Lower lobe of right lung (tissue), 2 donors: ENCODE measurements at regions of chr17 and their contacts with region 1.

Region 1: DNA sequence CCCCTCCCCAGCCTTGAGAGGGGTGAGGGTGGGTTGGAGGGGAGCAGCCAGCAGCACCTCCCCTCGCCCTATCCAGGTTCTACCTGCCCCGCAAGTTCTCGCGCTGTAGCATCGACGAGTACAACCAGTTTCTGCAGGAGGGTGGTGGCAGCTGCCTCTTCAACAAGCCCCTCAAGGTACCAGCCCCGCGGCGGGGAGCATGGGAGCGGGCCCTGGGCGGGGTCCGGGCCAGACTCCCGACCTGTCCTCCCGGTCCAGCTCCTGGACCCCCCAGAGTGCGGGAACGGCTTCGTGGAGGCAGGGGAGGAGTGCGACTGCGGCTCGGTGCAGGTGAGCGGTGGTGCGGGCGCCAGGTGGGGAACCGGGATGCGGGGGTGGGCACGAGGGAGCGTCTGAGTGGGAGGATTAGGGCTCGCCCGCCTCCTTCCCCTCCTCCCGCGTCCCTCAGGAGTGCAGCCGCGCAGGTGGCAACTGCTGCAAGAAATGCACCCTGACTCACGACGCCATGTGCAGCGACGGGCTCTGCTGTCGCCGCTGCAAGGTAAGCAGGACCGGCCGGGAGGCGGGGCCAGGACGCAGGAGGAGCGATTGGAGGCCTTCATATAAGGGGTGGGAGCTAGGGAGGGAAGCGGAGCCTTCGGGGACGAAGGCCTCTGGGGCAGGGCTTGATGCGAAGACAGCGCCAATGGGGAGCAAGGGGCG is 16.5 kb downstream of the ADAM11 start:
- DNase-seq: peak; percentile 98
- ATAC-seq: peak; percentile 97
- H3K4me3 ChIP-seq: peak overlapping the region; percentile 77
- H3K27ac ChIP-seq: no peak overlapping the region
- H3K4me1 ChIP-seq: peaks cover 29% of the 10 kb centered on the region
- H3K27me3 ChIP-seq: peaks cover 38% of the 10 kb centered on the region
- CTCF ChIP-seq: peak; percentile 11

Region 2: DNA sequence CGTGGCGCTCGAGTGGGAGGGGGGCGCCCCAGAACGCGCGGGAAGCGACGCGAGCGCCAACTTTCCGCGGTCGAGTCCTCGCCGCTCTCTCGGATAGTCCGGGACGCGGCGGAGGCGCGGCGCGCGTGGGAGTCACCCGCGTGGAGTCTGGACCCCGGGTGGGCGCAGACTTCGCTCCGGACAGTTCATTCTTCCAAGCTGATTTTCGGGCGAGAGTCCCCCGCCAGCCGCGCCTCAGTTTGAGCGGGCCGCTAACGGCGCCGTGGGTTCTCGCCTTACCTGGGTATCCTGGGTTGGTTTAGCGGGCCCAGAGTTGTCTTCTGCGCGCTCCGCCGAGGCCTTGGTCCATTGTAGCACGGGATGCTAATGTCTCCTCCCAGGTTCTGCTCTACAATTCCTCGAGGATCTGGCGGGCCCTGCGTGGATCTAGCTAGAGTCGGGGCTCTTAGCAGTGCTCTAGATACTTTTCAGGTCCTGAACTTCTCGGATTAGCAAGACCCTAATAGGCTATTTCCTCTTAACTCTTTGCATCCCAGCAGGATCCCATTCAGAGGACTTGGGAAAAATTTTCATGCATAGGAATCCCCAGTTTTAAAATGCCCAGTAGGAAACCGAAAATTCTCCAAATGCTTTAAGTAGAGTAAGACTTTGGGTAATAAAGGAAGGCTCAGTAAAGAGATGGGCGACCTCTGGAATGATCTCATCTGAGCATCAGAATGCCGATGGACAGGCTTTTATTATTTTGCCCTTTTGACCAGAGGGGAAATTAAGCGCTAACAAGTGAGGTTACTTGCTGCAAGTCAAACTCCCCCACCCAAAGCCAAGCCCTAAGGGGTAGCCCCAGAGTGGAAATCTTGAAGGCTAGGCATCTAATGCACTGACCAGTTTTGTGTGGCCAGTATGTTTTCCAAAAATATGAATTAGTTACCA is 55.3 kb after region 1 on chr17:
- intact Hi-C with region 1: no loop called
- DNase-seq: no peak
- ATAC-seq: peak in 1 of 2 donors; percentile 21
- H3K4me3 ChIP-seq: peak overlapping the region; percentile 55
- H3K27ac ChIP-seq: peak overlapping the region; percentile 51
- H3K4me1 ChIP-seq: peaks cover 13% of the 10 kb centered on the region
- H3K27me3 ChIP-seq: peaks cover 76% of the 10 kb centered on the region
- CTCF ChIP-seq: no peak

Region 3: GRCh38 chr17:44859701-44860100 is 84.4 kb after region 1 on chr17:
- intact Hi-C with region 1: loop called (anchors 5 kb)
- DNase-seq: no peak
- ATAC-seq: no peak
- H3K4me3 ChIP-seq: no peak overlapping the region
- H3K27ac ChIP-seq: no peak overlapping the region
- H3K4me1 ChIP-seq: no peaks in the 10 kb centered on the region
- H3K27me3 ChIP-seq: no peaks in the 10 kb centered on the region
- CTCF ChIP-seq: no peak

Region 4: DNA sequence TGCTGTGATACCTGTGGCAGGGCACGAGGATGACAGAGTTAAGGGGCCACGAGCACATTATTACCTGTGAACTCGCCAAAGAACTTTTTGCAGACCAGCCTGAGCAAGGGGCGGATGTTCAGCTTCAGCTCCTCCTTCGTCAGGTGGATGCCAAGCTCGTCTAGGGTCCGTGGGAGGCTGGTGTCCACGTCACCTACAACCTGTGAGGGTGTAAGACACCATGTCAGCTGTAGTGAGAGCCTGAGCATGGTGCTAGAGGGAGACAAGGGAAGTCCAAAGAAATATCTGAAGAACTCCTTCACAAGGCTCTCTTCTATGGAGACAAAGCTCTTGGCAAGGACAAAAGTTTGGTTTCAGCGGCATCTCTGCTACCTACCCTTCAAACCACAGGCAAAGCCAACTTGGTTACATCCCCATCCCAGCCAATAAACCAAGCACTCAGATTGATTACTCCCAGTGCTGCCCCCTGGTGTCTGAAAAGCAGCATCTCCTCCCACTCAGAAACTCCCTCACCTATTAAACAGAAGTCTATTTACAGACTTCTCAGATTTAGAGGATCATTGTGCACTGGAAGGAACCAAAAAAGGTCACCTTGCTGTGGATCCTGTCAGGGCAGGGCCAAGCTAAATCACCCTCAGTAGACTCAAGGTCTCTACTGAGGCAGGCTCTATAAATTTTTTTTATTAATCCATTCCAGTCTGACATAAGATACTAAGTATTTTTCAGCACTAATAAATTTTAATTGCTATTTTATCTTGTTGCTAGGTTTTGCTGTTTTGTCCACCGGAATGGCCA is 89.8 kb after region 1 on chr17:
- intact Hi-C with region 1: loop called (anchors 5 kb)
- DNase-seq: peak; percentile 61
- ATAC-seq: peak; percentile 71 to 77
- H3K4me3 ChIP-seq: no peak overlapping the region
- H3K27ac ChIP-seq: no peak overlapping the region
- H3K4me1 ChIP-seq: no peaks in the 10 kb centered on the region
- H3K27me3 ChIP-seq: no peaks in the 10 kb centered on the region
- CTCF ChIP-seq: peak; percentile 88

Region 5: GRCh38 chr17:44894642-44895041 is 119.4 kb after region 1 on chr17:
- intact Hi-C with region 1: no loop called
- DNase-seq: no peak
- ATAC-seq: no peak
- H3K4me3 ChIP-seq: no peak overlapping the region
- H3K27ac ChIP-seq: no peak overlapping the region
- H3K4me1 ChIP-seq: peaks cover 20% of the 10 kb centered on the region
- H3K27me3 ChIP-seq: no peaks in the 10 kb centered on the region
- CTCF ChIP-seq: no peak